ENCODE measurements at regions of chr1 and their contacts with region 1.

Region 1: GRCh38 chr1:165697881-165698760 is at the start of gene ALDH9A1:
- DNase-seq: peak; percentile 81 to 87
- ATAC-seq: peak; percentile 88 to 95 (median 90)
- H3K4me3 ChIP-seq: peak within 1 kb of the TSS; percentile 70
- H3K4me3 Mint-ChIP-seq: peak within 1 kb of the TSS; percentile 93
- H3K27ac ChIP-seq: peak within 1 kb of the TSS; percentile 84
- H3K27ac Mint-ChIP-seq: peak within 1 kb of the TSS; percentile 97 to 100
- H3K4me1 ChIP-seq: peaks cover 10% of the 10 kb centered on the region
- H3K4me1 Mint-ChIP-seq: peaks cover 21 to 25% of the 10 kb centered on the region in 2 donors
- H3K27me3 ChIP-seq: no peaks in the 10 kb centered on the region
- H3K27me3 Mint-ChIP-seq: no peaks in the 10 kb centered on the region
- CTCF ChIP-seq: no peak
- total RNA-seq, gene ALDH9A1: 38.0 to 57.1 (median 50.3) TPM

Region 2: DNA sequence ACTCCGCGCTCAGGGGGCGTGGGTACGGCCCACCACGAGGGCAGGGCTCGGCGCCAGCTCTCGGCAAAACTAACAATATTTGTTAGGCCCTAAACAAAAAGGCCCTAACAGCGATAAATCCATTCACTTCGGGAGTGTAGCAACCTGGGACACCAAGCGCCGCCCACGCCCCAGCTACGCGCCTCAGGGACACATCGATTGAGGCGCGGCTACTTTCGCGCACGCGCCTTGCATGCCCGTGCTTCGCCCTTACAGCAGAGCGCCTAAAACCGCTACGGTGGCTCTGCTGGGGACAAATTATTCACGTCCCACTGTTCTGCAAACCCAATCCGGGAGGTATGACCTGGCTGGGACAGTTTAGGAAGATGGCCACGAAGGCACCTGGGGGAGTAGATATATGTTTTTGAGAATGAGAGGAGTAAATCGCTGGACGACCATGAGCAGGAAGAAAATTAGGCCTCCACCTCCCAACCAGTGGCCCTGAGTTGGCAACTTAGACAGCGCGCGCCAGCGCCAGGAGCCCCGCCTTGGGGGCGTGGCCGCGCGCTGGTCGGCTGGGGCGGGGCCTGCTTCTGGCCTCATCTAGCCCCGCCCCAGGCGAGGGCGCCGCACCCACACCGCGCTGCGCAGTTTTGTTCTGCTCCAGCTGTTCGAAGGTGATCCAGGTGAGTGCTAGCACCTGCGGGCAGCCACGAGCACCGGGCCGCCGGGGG is 67.3 kb before region 1 on chr1 and contains the start of gene MGST3:
- intact Hi-C with region 1: loop called (anchors 1 kb)
- DNase-seq: peak; percentile 90 to 96
- ATAC-seq: peak; percentile 94 to 99 (median 96)
- H3K4me3 ChIP-seq: peak within 1 kb of the TSS; percentile 64
- H3K4me3 Mint-ChIP-seq: no peak within 1 kb of the TSS
- H3K27ac ChIP-seq: peak within 1 kb of the TSS; percentile 89
- H3K27ac Mint-ChIP-seq: no peak within 1 kb of the TSS
- H3K4me1 ChIP-seq: peaks cover 20% of the 10 kb centered on the region
- H3K4me1 Mint-ChIP-seq: peaks cover 0 to 19% of the 10 kb centered on the region in 2 donors
- H3K27me3 ChIP-seq: no peaks in the 10 kb centered on the region
- H3K27me3 Mint-ChIP-seq: no peaks in the 10 kb centered on the region
- CTCF ChIP-seq: no peak
- total RNA-seq, gene MGST3: 27.2 to 34.3 (median 29.0) TPM

Measured in natural killer cell (primary cell).